ENCODE measurements at regions of chr22 and their contacts with region 1.

Region 1: DNA sequence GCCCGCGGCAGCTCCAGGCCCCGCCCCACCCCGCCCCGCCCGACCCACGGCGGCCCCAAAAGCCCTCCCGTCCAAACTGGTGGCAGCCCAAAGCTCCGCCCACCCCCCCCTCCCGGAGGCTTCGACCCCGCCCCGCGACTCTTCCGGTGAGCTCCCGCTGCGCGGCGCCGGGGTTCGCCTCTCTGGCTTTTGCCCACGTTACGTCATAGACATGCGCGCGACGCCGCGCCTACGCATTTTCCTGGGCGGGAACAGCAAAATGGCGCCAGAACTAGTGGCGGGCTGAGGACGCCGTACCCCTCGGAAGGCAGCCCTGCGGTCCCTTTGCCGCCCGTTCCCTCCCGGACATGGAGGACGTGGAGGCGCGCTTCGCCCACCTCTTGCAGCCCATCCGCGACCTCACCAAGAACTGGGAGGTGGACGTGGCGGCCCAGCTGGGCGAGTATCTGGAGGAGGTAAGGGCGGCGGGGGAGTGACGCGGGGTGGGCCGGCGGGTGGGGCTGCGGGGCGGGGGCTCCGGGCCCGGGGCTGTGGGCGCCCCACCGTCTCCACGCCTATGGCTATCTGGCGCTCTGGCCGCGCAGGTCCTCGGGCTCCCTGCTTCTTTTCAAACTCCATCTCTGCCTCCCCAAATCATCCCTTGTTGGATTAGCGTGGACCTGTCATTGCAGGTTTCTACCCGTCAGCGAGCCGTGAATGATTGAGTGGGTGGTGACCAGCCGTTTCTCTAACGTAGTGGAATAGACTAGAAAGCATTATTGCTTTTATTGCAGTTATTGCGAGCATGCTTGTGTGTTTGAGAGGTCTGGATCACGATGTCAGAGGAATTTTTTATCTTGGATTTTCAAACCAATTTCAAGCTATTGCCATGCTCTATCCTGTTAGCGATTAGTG is at the start of gene NCAPH2:
- DNase-seq: peak; percentile 95 to 99 (median 98)
- H3K4me3 ChIP-seq: peak within 1 kb of the TSS; percentile 92 to 98 (median 96)
- H3K4me3 Mint-ChIP-seq: peak within 1 kb of the TSS; percentile 95 to 96
- H3K27ac ChIP-seq: peak within 1 kb of the TSS; percentile 78 to 87
- H3K27ac Mint-ChIP-seq: peak within 1 kb of the TSS; percentile 86 to 97 (median 94)
- H3K4me1 ChIP-seq: peaks cover 19 to 26% of the 10 kb centered on the region in 2 donors
- H3K4me1 Mint-ChIP-seq: peaks cover 20% of the 10 kb centered on the region
- H3K27me3 ChIP-seq: no peaks in the 10 kb centered on the region
- H3K27me3 Mint-ChIP-seq: peaks cover 0 to 5% (median 0%) of the 10 kb centered on the region in 3 donors
- CTCF ChIP-seq: no peak
- polyA plus RNA-seq, gene NCAPH2: 12.5 to 23.6 (median 18.1) TPM

Region 2: GRCh38 chr22:50525390-50526068 is 17.3 kb after region 1 on chr22 and contains the start of gene SCO2:
- intact Hi-C with region 1: loop called (anchors 2 kb)
- DNase-seq: peak; percentile 93 to 94 (median 94)
- H3K4me3 ChIP-seq: peak within 1 kb of the TSS; percentile 72 to 99 (median 73)
- H3K4me3 Mint-ChIP-seq: peak within 1 kb of the TSS; percentile 91 to 95
- H3K27ac ChIP-seq: peak within 1 kb of the TSS; percentile 100
- H3K27ac Mint-ChIP-seq: peak within 1 kb of the TSS; percentile 94 to 100 (median 97)
- H3K4me1 ChIP-seq: peaks cover 42 to 68% of the 10 kb centered on the region in 2 donors
- H3K4me1 Mint-ChIP-seq: peaks cover 30% of the 10 kb centered on the region
- H3K27me3 ChIP-seq: no peaks in the 10 kb centered on the region
- H3K27me3 Mint-ChIP-seq: no peaks in the 10 kb centered on the region
- CTCF ChIP-seq: no peak
- polyA plus RNA-seq, gene SCO2: 39.5 to 101 (median 69.6) TPM

Region 3: DNA sequence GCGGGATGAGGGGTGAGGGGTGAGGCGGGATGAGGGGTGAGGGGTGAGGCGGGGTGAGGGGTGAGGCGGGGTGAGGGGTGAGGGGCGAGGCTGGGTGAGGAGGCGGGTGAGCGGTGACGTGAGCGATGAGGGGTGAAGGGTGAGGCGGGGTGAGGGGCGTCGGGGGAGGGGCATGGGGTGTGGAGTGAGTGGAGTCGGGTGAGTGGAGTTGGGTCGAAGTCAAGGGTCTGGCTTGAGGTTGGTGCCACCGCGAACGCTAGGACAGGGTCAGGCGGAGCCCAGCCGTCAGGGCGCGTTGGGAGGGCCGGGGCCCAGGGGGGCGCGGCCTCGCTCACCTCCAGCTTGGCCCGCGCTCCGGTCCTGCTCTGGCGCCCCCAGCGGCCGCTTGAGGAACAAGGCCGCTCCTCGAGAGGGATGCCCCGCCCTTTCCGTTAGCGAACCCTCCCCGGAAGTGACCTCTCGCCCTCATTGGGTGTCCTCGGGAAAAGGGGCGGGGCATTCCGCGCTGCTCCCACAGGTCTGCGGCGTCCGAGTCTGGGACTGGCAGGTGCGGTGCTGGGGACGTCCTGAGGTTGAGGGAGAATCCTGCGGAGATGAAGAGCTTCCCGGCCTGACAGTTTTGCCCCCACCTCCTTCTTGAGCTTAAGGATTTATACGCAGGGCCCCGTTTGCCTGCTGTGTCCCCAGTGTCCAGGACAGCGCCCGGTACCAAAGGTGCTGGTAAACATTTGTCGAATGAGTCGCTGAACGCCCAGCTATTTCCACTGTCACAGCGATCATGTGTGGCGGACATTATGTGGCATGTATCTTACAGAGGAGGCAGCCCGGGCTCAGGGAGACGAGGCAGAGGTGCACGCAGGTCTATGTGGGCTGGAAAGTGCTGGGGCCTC is 54.5 kb after region 1 on chr22 and contains the start of gene SYCE3:
- intact Hi-C with region 1: loop called in 1 of 2 experiments (anchors 5 kb)
- DNase-seq: peak; percentile 94 to 96 (median 95)
- H3K4me3 ChIP-seq: peak within 1 kb of the TSS; percentile 53 to 94 (median 66)
- H3K4me3 Mint-ChIP-seq: peak within 1 kb of the TSS; percentile 88 to 96
- H3K27ac ChIP-seq: peak within 1 kb of the TSS in 1 of 2 donors; percentile 45
- H3K27ac Mint-ChIP-seq: peak within 1 kb of the TSS; percentile 57 to 95 (median 73)
- H3K4me1 ChIP-seq: peaks cover 8 to 13% of the 10 kb centered on the region in 2 donors
- H3K4me1 Mint-ChIP-seq: peaks cover 17% of the 10 kb centered on the region
- H3K27me3 ChIP-seq: peaks cover 0 to 8% of the 10 kb centered on the region in 2 donors
- H3K27me3 Mint-ChIP-seq: peaks cover 17 to 22% (median 17%) of the 10 kb centered on the region in 3 donors
- CTCF ChIP-seq: peak; percentile 87
- polyA plus RNA-seq, gene SYCE3: 1.9 to 3.1 TPM in 2 of 3 donors, not detected in the other

Region 4: DNA sequence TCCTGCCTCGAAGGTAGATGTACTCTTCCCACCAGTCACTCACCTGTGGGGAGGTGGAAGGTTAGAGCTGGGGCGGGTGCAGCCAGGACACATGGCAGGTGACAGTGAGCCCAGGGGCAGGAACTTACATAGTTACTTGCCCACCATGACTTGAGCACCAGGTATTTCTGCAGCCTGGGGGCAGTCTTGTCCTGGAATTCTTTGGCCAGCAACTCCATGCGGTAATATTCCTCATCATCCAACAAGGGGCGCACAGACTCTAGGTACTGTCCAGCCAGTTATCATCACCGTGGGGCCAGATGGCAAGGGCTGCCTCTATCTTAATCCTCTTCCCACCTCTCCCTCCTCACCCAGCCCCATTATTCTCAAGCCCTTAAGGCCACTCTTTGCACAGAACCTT is 67.8 kb after region 1 on chr22:
- intact Hi-C with region 1: loop called (anchors 5 kb)
- DNase-seq: peak in 1 of 3 donors; percentile 3
- H3K4me3 ChIP-seq: no peak overlapping the region
- H3K4me3 Mint-ChIP-seq: peak overlapping the region in 1 of 2 donors; percentile 13
- H3K27ac ChIP-seq: no peak overlapping the region
- H3K27ac Mint-ChIP-seq: peak overlapping the region in 1 of 7 donors; percentile 21
- H3K4me1 ChIP-seq: peaks cover 11 to 22% of the 10 kb centered on the region in 2 donors
- H3K4me1 Mint-ChIP-seq: peaks cover 23% of the 10 kb centered on the region
- H3K27me3 ChIP-seq: no peaks in the 10 kb centered on the region
- H3K27me3 Mint-ChIP-seq: peaks cover 2 to 11% (median 8%) of the 10 kb centered on the region in 3 donors
- CTCF ChIP-seq: no peak

Region 5: DNA sequence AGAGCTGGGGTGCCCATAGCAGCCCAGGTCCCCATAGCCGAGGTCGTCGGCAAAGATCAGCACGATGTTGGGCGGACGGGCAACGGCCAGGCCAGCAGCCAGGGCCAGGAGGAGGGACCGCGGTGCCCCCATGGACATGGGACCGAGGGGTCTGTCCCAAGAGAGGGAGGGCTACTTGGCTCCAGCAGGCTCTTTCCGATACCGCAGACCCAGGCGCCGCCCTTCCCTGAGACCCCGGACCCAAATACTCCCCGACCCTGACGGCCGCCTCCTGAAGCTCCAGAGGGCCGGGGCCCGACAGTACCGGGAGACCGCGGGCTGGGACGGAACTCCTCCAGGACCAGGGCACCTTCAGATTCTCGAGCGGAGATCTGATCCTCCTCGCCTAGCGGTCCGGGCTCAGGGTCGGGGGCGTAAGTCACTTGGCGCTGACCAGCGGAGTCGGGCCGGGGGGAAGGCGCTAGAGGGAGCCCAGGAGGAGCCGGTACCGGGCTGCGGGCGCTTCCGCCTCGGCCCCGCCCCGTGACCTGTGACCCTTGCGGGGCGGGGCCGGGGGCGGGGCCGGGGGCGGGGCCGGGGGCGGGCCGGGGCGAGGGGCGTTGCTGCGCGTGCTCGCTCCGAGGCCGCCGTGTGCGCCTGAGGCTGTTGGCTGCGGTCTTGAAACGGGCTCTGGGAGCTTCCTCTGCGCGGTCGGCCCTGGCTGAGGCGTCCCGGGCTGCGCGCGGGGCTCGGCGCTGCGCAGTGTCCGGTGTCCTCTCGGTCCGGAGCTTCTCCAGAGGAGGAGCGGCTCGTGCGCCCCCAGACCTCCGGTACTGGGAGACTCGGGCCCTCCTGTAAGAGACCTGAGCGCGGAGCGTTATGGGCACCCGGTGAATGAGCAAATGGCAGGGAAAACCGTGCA is 119.7 kb after region 1 on chr22 and contains the start of gene ARSA:
- intact Hi-C with region 1: loop called (anchors 2 to 5 kb)
- DNase-seq: peak; percentile 81 to 89 (median 81)
- H3K4me3 ChIP-seq: peak within 1 kb of the TSS; percentile 89 to 96 (median 96)
- H3K4me3 Mint-ChIP-seq: peak within 1 kb of the TSS; percentile 82 to 87
- H3K27ac ChIP-seq: peak within 1 kb of the TSS; percentile 45 to 74
- H3K27ac Mint-ChIP-seq: peak within 1 kb of the TSS; percentile 38 to 83 (median 65)
- H3K4me1 ChIP-seq: peaks cover 22 to 29% of the 10 kb centered on the region in 2 donors
- H3K4me1 Mint-ChIP-seq: peaks cover 23% of the 10 kb centered on the region
- H3K27me3 ChIP-seq: no peaks in the 10 kb centered on the region
- H3K27me3 Mint-ChIP-seq: peaks cover 0 to 4% (median 3%) of the 10 kb centered on the region in 3 donors
- CTCF ChIP-seq: peak; percentile 28
- polyA plus RNA-seq, gene ARSA: 11.9 to 85.2 (median 12.1) TPM

Measured in CD14-positive monocyte (primary cell).